ENCODE measurements at regions of chr9 and their contacts with region 1.

Region 1: DNA sequence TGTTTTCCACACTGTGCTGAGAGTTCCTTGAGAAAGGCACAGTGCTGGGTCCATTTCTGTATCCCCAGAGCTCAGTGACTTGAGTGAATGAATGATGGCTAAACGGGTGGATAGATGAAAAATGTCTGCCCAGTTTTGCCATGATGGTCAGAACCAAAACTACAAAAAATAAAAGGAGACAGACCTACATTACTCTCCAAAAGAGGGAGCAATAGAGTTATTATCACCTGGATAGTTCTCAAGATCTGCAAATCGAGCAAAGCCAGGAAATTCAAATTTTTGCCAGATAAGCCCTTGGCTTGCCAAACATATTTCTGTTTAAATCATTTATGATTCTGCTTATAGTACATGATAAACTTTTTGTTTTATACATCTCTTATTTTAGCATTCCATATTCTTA is 214.2 kb upstream of the ZNF462 start:
- DNase-seq: no peak
- ATAC-seq: no peak
- H3K4me3 Mint-ChIP-seq: no peak overlapping the region
- H3K27ac Mint-ChIP-seq: no peak overlapping the region
- H3K4me1 Mint-ChIP-seq: no peaks in the 10 kb centered on the region
- H3K27me3 Mint-ChIP-seq: no peaks in the 10 kb centered on the region
- CTCF ChIP-seq: no peak

Region 2: GRCh38 chr9:106218854-106219253 is 429.9 kb before region 1 on chr9:
- CTCF ChIA-PET with region 1: no interaction called
- POLR2A ChIA-PET with region 1: no interaction called
- intact Hi-C with region 1: no loop called
- DNase-seq: no peak
- ATAC-seq: no peak
- H3K4me3 Mint-ChIP-seq: no peak overlapping the region
- H3K27ac Mint-ChIP-seq: no peak overlapping the region
- H3K4me1 Mint-ChIP-seq: no peaks in the 10 kb centered on the region
- H3K27me3 Mint-ChIP-seq: no peaks in the 10 kb centered on the region
- CTCF ChIP-seq: no peak

Region 3: DNA sequence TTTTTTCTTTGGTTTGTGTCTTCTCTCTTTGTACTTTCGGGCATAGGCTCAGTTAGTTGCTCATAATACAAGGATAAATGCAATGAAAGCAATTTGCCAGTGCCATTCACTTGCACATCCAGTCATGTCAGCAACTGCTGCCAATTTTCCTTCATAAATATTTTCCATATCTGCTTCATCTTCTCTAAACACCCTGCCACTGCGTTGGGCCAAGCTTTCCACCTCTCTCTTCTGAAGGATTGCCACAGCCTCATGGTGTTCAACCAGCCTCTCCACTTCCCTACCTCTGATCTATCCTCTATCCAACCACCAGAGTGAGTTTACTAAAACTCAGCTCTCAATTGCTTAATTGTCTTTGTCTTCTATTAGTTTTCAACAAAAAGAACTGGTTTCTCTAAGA is 21.6 kb after region 1 on chr9:
- CTCF ChIA-PET with region 1: no interaction called
- POLR2A ChIA-PET with region 1: no interaction called
- intact Hi-C with region 1: no loop called
- DNase-seq: no peak
- ATAC-seq: no peak
- H3K4me3 Mint-ChIP-seq: no peak overlapping the region
- H3K27ac Mint-ChIP-seq: no peak overlapping the region
- H3K4me1 Mint-ChIP-seq: no peaks in the 10 kb centered on the region
- H3K27me3 Mint-ChIP-seq: no peaks in the 10 kb centered on the region
- CTCF ChIP-seq: no peak

Region 4: DNA sequence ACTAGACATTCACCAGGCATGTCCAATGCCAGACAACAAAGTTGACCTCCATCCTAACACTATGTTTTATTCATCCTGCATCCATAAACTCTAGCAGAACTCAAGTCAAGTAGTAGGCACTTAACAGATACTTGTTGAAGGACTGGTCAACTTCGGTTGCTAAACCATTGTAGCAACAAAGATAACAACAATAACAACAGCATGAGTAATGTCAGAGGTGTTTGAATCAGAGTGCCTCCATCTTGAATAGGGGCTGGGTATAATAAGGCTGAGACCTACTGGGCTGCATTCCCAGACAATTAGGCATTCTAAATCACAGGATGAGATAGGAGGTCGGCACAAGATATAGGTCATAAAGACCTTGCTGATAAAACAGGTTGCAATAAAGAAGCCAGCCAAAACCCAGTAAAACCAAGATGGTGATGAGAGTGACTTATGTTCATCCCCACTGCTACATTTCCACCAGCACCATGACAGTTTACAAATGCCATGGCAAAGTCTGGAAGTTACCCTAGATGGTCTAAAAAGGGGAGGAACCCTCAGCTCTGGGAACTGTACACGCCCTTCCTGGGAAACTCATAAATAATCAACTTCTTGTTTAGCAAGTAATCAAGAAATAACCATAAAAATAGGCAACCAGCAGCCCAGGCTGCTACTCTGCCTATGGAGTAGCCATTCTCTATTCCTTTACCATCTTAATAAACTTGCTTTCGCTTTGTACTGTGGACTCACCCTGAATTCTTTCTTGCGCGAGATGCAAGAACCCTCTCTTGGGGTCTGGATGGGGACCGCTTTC is 33.8 kb after region 1 on chr9:
- CTCF ChIA-PET with region 1: no interaction called
- POLR2A ChIA-PET with region 1: no interaction called
- intact Hi-C with region 1: no loop called
- DNase-seq: no peak
- ATAC-seq: no peak
- H3K4me3 Mint-ChIP-seq: no peak overlapping the region
- H3K27ac Mint-ChIP-seq: no peak overlapping the region
- H3K4me1 Mint-ChIP-seq: no peaks in the 10 kb centered on the region
- H3K27me3 Mint-ChIP-seq: no peaks in the 10 kb centered on the region
- CTCF ChIP-seq: no peak

Region 5: DNA sequence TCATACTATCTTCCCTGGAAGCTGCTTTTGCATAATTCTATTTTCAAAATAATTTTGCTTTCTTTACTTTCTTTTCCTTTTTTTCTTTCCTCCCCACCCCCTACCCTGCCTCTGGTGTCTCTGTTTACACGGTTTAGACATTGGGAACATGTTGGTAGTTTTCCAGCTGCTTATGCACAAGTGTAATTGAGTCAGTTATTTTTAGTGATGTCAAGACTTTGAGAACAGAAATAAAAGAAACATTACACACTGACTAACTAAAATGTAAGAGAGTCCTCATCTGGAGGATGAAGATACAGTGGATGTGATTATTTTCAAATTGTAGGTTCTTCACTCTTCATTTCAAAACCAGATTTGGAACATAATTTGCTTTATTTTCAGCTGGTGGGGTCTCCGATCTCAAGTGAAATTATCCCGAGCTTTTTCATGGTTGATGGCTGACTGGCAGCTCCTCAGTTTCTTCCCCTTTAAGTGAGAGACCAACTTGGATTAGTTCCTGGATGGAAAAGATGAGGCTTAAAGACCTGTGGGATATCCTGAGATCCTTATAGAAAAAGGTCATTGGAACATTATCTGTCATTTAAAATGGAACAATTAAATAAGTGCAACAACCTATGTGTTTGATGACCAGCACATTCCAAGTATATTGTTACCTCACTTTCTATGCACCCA is 59.8 kb after region 1 on chr9:
- CTCF ChIA-PET with region 1: no interaction called
- POLR2A ChIA-PET with region 1: no interaction called
- intact Hi-C with region 1: no loop called
- DNase-seq: no peak
- ATAC-seq: no peak
- H3K4me3 Mint-ChIP-seq: no peak overlapping the region
- H3K27ac Mint-ChIP-seq: no peak overlapping the region
- H3K4me1 Mint-ChIP-seq: no peaks in the 10 kb centered on the region
- H3K27me3 Mint-ChIP-seq: no peaks in the 10 kb centered on the region
- CTCF ChIP-seq: no peak

Region 6: GRCh38 chr9:107172160-107172978 is 523.6 kb after region 1 on chr9:
- CTCF ChIA-PET with region 1: no interaction called
- POLR2A ChIA-PET with region 1: no interaction called
- intact Hi-C with region 1: loop called (anchors 5 kb)
- DNase-seq: peak; percentile 18
- ATAC-seq: peak; percentile 52
- H3K4me3 Mint-ChIP-seq: no peak overlapping the region
- H3K27ac Mint-ChIP-seq: no peak overlapping the region
- H3K4me1 Mint-ChIP-seq: no peaks in the 10 kb centered on the region
- H3K27me3 Mint-ChIP-seq: peaks cover 17% of the 10 kb centered on the region
- CTCF ChIP-seq: peak; percentile 45